ENCODE measurements at regions of chr14 and their contacts with region 1.

Region 1: GRCh38 chr14:61525293-61526011 is 169.9 kb upstream of the HIF1A start:
- DNase-seq: peak; percentile 87
- H3K4me3 Mint-ChIP-seq: peak overlapping the region; percentile 66
- H3K27ac Mint-ChIP-seq: peak overlapping the region; percentile 65
- H3K4me1 Mint-ChIP-seq: peaks cover 77% of the 10 kb centered on the region
- H3K27me3 Mint-ChIP-seq: no peaks in the 10 kb centered on the region

Region 2: GRCh38 chr14:61503167-61503801 is 22.2 kb before region 1 on chr14:
- intact Hi-C with region 1: loop called (anchors 1 kb)
- DNase-seq: peak; percentile 84
- H3K4me3 Mint-ChIP-seq: peak overlapping the region; percentile 76
- H3K27ac Mint-ChIP-seq: peak overlapping the region; percentile 95
- H3K4me1 Mint-ChIP-seq: peaks cover 79% of the 10 kb centered on the region
- H3K27me3 Mint-ChIP-seq: no peaks in the 10 kb centered on the region

Region 3: GRCh38 chr14:61511558-61511924 is 13.9 kb before region 1 on chr14:
- intact Hi-C with region 1: loop called (anchors 1 kb)
- DNase-seq: peak; percentile 75
- H3K4me3 Mint-ChIP-seq: peak overlapping the region; percentile 65
- H3K27ac Mint-ChIP-seq: peak overlapping the region; percentile 83
- H3K4me1 Mint-ChIP-seq: peaks cover 73% of the 10 kb centered on the region
- H3K27me3 Mint-ChIP-seq: no peaks in the 10 kb centered on the region

Region 4: DNA sequence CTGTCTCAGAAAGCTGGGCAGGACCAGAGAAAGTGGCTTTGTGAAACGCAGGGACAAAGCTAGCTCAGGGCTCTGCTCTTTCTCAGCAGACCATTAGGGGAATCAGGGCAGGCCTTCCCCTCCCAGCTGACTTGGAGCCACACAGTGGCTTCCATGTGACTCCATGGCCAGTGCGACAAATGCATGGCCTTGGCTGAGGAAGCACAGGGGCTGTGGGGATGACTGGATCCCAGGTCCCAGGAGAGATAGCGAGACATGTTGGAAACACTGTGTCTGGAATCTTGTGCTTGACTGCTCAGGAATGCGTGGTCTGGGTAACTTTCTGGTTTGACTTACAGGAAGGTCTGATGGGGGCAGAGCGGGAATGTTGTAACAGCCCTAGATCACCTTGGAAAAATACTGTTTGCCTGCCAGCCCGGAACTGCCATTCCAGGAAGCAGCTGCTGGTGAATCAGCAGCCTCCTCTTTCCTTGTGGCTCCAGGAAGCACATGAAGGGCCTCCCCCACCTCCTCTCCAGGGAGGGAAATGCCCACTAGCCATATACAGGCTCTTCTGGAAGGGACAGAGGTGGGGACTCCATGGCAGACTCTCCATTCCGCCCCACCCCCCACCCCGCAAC is 36.3 kb after region 1 on chr14:
- intact Hi-C with region 1: loop called (anchors 2 kb)
- DNase-seq: no peak
- H3K4me3 Mint-ChIP-seq: peak overlapping the region; percentile 5
- H3K27ac Mint-ChIP-seq: peak overlapping the region; percentile 70
- H3K4me1 Mint-ChIP-seq: peaks cover 60% of the 10 kb centered on the region
- H3K27me3 Mint-ChIP-seq: no peaks in the 10 kb centered on the region

Region 5: GRCh38 chr14:61730756-61731373 is 205.4 kb after region 1 on chr14:
- intact Hi-C with region 1: loop called (anchors 5 kb)
- DNase-seq: no peak
- H3K4me3 Mint-ChIP-seq: no peak overlapping the region
- H3K27ac Mint-ChIP-seq: peak overlapping the region; percentile 9
- H3K4me1 Mint-ChIP-seq: peaks cover 56% of the 10 kb centered on the region
- H3K27me3 Mint-ChIP-seq: no peaks in the 10 kb centered on the region

Measured in activated CD4-positive, alpha-beta T cell treated with anti-CD3 and anti-CD28 coated beads, Interleukin-2, amount 10 ng/mL, durations not matched to agents 24 days and 14 days (primary cell).